Ovary (tissue), 10 donors: ENCODE measurements at regions of chr9 and their contacts with region 1.

Region 1: GRCh38 chr9:6598249-6598725 is 47.2 kb downstream of the GLDC start:
- DNase-seq: no peak
- H3K4me3 ChIP-seq: no peak overlapping the region
- H3K27ac ChIP-seq: no peak overlapping the region
- H3K4me1 ChIP-seq: no peaks in the 10 kb centered on the region
- H3K27me3 ChIP-seq: no peaks in the 10 kb centered on the region
- CTCF ChIP-seq: no peak
- EP300 ChIP-seq: no peak
- POLR2A ChIP-seq: no peak

Region 2: GRCh38 chr9:6498982-6499381 is 99.3 kb before region 1 on chr9:
- intact Hi-C with region 1: no loop called
- DNase-seq: no peak
- H3K4me3 ChIP-seq: no peak overlapping the region
- H3K27ac ChIP-seq: no peak overlapping the region
- H3K4me1 ChIP-seq: no peaks in the 10 kb centered on the region
- H3K27me3 ChIP-seq: no peaks in the 10 kb centered on the region
- CTCF ChIP-seq: no peak
- EP300 ChIP-seq: no peak
- POLR2A ChIP-seq: no peak

Region 3: GRCh38 chr9:6535594-6535993 is 62.7 kb before region 1 on chr9:
- intact Hi-C with region 1: no loop called
- DNase-seq: no peak
- H3K4me3 ChIP-seq: no peak overlapping the region
- H3K27ac ChIP-seq: no peak overlapping the region
- H3K4me1 ChIP-seq: no peaks in the 10 kb centered on the region
- H3K27me3 ChIP-seq: no peaks in the 10 kb centered on the region
- CTCF ChIP-seq: no peak
- EP300 ChIP-seq: no peak
- POLR2A ChIP-seq: no peak

Region 4: GRCh38 chr9:6673326-6674025 is 75.2 kb after region 1 on chr9:
- intact Hi-C with region 1: loop called in 1 of 4 experiments (anchors 10 kb)
- DNase-seq: no peak
- H3K4me3 ChIP-seq: no peak overlapping the region
- H3K27ac ChIP-seq: no peak overlapping the region
- H3K4me1 ChIP-seq: no peaks in the 10 kb centered on the region
- H3K27me3 ChIP-seq: no peaks in the 10 kb centered on the region
- CTCF ChIP-seq: no peak
- EP300 ChIP-seq: no peak
- POLR2A ChIP-seq: no peak